Thyroid gland (tissue), 4 donors: ENCODE measurements at regions of chr2 and their contacts with region 1.

Region 1: GRCh38 chr2:217434181-217434975 is 568.4 kb downstream of the TNS1 start:
- DNase-seq: peak; percentile 93 to 95
- H3K4me3 ChIP-seq: no peak overlapping the region
- H3K27ac ChIP-seq: peak overlapping the region; percentile 77 to 93 (median 78)
- H3K4me1 ChIP-seq: peaks cover 60 to 82% of the 10 kb centered on the region in 2 donors
- H3K27me3 ChIP-seq: no peaks in the 10 kb centered on the region
- CTCF ChIP-seq: peak in 1 of 6 experiments; percentile 21
- POLR2A ChIP-seq: peak in 1 of 2 donors; percentile 84

Region 2: DNA sequence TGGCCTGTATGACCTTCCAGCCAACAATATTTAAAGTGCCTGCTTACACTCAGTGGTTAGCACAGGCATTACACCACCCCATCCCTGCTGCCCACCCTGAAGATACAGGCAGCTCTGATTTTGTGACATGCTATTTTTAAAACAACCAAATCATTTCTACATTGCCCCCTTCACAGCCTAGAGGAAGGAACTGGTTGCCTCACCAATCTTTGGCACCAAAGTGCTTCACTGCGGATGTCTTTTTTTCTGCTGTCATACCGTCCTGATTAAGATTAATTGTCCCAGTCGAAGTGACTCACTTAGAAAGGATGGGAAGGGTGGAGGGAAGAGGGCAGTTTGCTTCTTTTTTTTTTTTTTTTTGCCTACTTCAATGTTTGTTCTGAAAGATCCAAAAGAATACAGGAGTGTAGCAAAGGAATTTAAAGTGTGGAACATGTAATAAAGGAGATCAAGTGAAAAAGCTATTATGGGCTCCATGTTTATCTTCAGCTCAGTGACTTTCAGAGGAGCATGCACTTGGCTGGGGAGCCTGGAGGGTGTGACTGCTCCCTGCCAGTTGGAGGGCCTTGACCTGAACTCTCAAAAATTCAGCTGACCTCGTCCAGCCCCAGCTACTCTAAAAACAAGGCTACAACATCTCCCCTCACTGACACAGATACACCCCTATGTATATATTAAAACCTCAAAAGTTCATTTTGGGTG is 73.4 kb before region 1 on chr2:
- intact Hi-C with region 1: loop called (anchors 10 kb)
- DNase-seq: peak; percentile 93
- H3K4me3 ChIP-seq: no peak overlapping the region
- H3K27ac ChIP-seq: peak overlapping the region; percentile 91 to 98 (median 97)
- H3K4me1 ChIP-seq: peaks cover 68 to 82% of the 10 kb centered on the region in 2 donors
- H3K27me3 ChIP-seq: no peaks in the 10 kb centered on the region
- CTCF ChIP-seq: peak in 1 of 6 experiments; percentile 37
- POLR2A ChIP-seq: no peak